PC-3 (cell line): ENCODE measurements at regions of chr5 and their contacts with region 1.

Region 1: DNA sequence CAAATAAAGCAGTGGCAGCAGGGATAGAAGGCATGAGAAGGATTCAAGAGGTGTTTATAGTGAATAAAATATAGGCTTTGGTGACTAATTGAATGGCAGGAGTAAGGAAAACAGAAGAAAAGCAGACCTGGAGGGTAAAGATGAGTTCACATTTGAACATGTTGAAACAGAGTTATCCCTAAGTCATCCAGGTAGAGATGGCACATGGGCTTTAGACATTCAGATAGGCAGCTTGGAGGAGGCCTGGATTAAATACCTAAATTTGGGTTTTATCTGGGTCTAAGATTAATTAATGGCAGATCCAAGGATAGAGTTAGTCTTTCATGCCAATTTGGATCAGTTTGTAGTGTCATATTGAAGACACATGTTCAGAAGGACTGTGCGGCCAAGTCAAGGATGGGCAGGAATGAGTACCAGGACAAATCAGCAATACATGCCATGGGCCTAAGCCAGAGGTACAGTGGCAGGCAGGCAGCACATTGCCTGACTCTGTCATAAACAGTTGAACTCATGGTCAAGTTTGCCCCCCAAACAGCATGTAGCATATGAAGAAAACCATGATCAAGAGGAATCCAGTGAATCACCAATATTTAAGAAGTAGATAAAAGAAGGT is 115.5 kb upstream of the SLC12A2 start:
- DNase-seq: no peak
- ATAC-seq: peak; percentile 61; the same call in 1 of the 2 replicates
- H3K4me3 ChIP-seq: no peak overlapping the region
- H3K27ac ChIP-seq: peak overlapping the region; percentile 94
- H3K4me1 ChIP-seq: peaks cover 23% of the 10 kb centered on the region
- H3K27me3 ChIP-seq: no peaks in the 10 kb centered on the region
- CTCF ChIP-seq: no peak

Region 2: DNA sequence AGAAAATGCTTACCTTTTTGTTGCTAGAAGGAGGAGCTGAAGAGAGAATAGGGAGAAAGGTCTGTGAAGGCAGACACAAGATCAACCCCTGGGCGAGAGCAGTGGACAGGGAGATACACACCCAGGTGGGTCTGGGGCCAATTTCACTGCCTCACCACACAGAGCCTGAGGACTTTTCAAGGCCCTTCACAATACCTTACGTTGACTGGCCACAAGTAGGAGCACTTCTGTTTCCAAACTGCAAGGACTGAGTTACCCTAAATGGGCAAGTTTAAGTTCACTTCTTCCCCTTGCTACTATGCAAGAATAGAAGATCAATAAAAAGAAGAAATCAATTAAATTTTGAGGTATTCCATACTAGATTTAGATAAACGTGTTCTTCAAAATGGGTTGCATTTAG is 59.0 kb before region 1 on chr5:
- CTCF ChIA-PET with region 1: no interaction called
- POLR2A ChIA-PET with region 1: no interaction called
- intact Hi-C with region 1: loop called (anchors 2 kb)
- DNase-seq: peak; percentile 78
- ATAC-seq: peak; percentile 73
- H3K4me3 ChIP-seq: no peak overlapping the region
- H3K27ac ChIP-seq: no peak overlapping the region
- H3K4me1 ChIP-seq: peaks cover 8% of the 10 kb centered on the region
- H3K27me3 ChIP-seq: no peaks in the 10 kb centered on the region
- CTCF ChIP-seq: peak; percentile 89